ENCODE measurements at regions of chr5 and their contacts with region 1.

Region 1: DNA sequence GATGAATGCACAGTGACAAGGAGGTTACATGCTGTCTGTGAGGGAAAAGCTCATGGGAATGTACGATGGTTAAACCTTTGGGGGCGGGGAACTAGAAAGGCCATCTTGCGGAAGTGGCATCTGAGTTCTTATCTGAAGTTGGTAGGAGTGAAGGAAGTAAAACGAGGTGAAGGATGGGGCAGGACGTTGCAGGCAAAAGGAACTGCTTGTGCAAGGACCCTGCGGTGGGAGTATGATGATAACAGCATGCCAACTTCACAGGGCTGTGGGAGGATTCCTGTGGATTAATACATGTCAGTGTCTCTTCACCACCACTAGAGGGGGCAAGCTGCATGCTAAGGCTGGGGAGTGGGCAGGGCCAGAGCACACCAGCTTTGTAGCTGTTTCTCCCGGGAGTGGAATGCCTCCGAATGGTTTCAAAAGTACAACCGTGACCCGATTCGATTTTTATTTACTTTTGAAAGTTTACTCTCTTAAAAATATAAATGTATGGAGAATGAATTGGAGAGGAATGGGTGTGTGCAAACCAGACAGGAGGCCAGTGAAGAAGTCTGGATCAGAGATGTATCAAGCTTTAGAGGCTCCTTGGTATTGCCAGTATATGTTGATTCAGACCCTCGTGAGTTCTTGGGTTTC is 62.5 kb downstream of the CYFIP2 start:
- DNase-seq: no peak
- ATAC-seq: peak; percentile 100
- H3K4me3 ChIP-seq: no peak overlapping the region
- H3K27ac ChIP-seq: no peak overlapping the region
- H3K4me1 ChIP-seq: no peaks in the 10 kb centered on the region
- H3K27me3 ChIP-seq: no peaks in the 10 kb centered on the region
- CTCF ChIP-seq: peak; percentile 85 to 94 (median 91)
- EP300 ChIP-seq: no peak
- POLR2A ChIP-seq: no peak
- RAD21 ChIP-seq: peak; percentile 85

Region 2: GRCh38 chr5:157342822-157343402 is 14.5 kb after region 1 on chr5:
- CTCF ChIA-PET with region 1: interaction called, 12 read pairs
- POLR2A ChIA-PET with region 1: no interaction called
- RAD21 ChIA-PET with region 1: interaction called, 3 read pairs
- SMC1A ChIA-PET with region 1: interaction called, 3 read pairs
- in situ Hi-C with region 1: no loop called
- intact Hi-C with region 1: no loop called
- DNase-seq: no peak
- ATAC-seq: peak; percentile 81
- H3K4me3 ChIP-seq: no peak overlapping the region
- H3K27ac ChIP-seq: no peak overlapping the region
- H3K4me1 ChIP-seq: no peaks in the 10 kb centered on the region
- H3K27me3 ChIP-seq: no peaks in the 10 kb centered on the region
- CTCF ChIP-seq: peak; percentile 46 to 68 (median 51)
- EP300 ChIP-seq: no peak
- POLR2A ChIP-seq: no peak
- RAD21 ChIP-seq: peak; percentile 15; the same call in 1 of the 2 replicates

Region 3: DNA sequence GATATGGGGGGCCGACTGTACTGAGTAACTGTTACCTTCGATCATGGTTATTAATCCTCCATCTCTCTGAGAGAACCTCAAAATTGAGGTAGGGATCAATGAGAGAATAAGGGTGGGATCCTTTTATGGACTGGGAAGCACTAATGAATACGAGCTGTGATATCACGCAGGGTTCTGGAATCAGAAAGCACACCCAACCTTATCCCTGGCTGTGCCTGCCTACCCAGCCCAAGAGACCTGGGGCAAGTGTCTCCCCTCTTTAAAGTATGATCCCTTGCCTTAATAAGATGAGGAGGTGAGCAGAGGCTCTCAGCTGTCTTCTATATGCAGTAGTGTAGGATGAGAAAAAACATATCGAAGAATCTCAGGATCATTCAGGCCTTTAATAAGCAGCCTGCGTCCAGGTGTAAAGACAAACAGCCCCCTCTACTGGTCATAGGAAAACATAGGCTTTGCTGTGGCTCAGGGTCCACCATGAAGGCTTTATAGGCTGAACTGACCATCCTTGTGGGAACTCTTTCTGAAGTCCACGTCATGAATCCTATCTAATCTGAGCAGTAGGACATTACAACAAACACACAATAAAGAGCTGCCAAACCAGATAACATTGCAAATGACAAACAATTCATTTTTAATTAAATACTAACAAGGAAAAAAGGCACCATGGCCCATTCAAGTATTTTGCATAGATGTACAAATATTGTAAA is 148.5 kb after region 1 on chr5:
- CTCF ChIA-PET with region 1: interaction called, 7 read pairs
- POLR2A ChIA-PET with region 1: no interaction called
- RAD21 ChIA-PET with region 1: interaction called, 3 read pairs
- SMC1A ChIA-PET with region 1: interaction called, 3 read pairs
- in situ Hi-C with region 1: no loop called
- intact Hi-C with region 1: loop called (anchors 5 kb)
- DNase-seq: no peak
- ATAC-seq: peak; percentile 85
- H3K4me3 ChIP-seq: no peak overlapping the region
- H3K27ac ChIP-seq: no peak overlapping the region
- H3K4me1 ChIP-seq: no peaks in the 10 kb centered on the region
- H3K27me3 ChIP-seq: no peaks in the 10 kb centered on the region
- CTCF ChIP-seq: peak; percentile 74 to 77 (median 77)
- EP300 ChIP-seq: no peak
- POLR2A ChIP-seq: no peak
- RAD21 ChIP-seq: peak; percentile 89

Region 4: DNA sequence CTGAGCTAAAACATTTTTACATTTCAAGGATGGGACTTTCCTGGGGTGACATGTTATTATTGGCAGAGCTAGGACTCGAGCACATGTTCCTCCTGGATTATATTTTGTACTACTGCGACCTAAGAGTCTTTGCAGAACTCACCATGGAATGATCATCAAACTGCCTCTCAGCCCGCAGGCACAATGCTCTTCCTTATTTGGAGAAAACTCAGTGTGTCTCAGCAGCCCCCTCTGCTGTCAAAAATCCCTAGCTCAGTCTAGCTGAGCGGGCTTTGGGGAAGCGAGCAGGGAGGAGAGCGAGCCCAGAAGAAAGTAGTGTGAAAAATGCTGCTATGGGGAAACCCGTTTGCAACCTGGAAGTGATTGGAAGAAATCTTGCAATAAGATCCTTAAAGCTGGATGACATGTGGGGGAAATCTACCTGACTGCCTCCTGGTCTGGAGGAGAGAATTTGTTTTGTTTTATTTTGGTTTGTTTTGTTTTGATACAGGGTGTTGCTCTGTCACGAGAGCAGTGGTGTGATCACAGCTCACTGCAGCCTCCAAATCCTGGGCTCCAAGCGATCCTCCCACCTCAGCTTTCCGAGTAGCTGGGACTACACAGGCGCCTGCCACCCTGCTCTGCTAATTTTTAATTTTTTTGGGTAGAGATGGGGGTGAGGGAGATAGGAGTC is 620.5 kb after region 1 on chr5:
- CTCF ChIA-PET with region 1: no interaction called
- POLR2A ChIA-PET with region 1: no interaction called
- RAD21 ChIA-PET with region 1: no interaction called
- SMC1A ChIA-PET with region 1: no interaction called
- in situ Hi-C with region 1: no loop called
- intact Hi-C with region 1: no loop called
- DNase-seq: peak; percentile 44
- ATAC-seq: peak; percentile 100
- H3K4me3 ChIP-seq: no peak overlapping the region
- H3K27ac ChIP-seq: no peak overlapping the region
- H3K4me1 ChIP-seq: no peaks in the 10 kb centered on the region
- H3K27me3 ChIP-seq: no peaks in the 10 kb centered on the region
- CTCF ChIP-seq: peak; percentile 83 to 94 (median 84)
- EP300 ChIP-seq: no peak
- POLR2A ChIP-seq: no peak
- RAD21 ChIP-seq: peak; percentile 80